ENCODE measurements at regions of chr5 and their contacts with region 1.

Region 1: DNA sequence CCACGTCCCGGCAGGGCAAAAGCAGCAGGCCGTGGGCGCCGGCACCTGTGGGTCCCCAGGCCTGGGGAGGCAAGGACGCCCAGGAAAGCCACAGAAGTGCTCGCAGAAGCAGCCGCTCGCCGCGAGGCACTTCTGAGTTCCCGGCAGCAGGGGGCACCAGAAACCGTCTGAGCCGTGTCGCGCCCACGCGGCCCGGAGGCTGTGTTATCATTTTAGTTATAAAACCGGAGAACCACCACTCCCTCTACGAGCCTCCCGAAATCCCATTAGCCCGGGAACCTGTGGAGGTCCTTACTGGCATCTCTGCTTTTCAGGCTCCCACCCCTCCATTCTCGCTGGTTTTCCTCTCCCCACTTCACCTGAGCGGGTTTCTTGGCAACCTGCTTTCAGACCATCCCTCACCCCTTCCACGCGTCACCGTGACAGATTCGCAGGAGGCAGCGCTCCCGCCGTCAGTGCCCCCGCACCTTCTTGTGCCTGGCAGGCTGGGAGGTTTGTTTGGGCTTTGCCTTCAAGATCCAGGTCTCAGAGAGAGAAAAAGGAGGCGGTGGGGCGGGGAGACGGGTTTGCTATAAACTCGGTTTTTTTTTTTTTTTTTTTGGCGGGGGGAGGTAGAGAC is 2.3 kb downstream of the GDNF start:
- DNase-seq: no peak
- H3K4me3 ChIP-seq: peak overlapping the region; percentile 44 to 54
- H3K27ac ChIP-seq: peak overlapping the region; percentile 36
- H3K4me1 ChIP-seq: peaks cover 51% of the 10 kb centered on the region
- H3K27me3 ChIP-seq: peaks cover 19% of the 10 kb centered on the region
- CTCF ChIP-seq: peak in 2 of 3 experiments; percentile 68 to 75
- POLR2A ChIP-seq: no peak

Region 2: DNA sequence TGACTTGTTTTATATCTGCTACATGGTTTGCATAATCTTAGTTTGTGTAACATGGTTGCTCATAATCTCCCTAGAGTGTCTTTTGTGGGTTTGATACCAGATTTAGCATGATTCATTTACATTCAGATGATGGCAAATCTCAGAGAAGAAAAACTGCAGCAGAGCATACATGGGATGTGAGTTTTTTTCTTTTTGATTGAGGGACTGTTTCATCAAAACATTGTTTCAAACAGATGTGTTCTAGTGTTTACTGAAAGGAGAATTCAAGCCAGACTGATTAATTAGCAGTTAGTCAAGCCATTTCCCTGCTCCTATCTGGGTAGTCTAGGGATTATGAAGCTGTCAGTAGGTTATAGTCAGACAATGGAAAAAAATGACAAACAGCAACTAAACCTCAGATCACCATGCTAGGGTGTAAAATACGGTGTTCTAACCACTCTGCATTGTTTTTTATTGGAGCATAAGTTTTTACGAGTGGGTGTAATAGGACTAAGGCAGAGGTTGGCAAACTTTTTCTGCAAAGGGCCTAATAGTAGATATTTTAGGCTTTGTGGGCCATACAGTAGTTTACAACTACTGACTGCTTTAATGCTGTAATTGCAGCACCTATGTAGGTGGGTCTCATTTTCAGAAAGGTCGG is 12.8 kb after region 1 on chr5:
- intact Hi-C with region 1: no loop called
- DNase-seq: no peak
- H3K4me3 ChIP-seq: no peak overlapping the region
- H3K27ac ChIP-seq: no peak overlapping the region
- H3K4me1 ChIP-seq: no peaks in the 10 kb centered on the region
- H3K27me3 ChIP-seq: no peaks in the 10 kb centered on the region
- CTCF ChIP-seq: no peak
- POLR2A ChIP-seq: no peak

Region 3: DNA sequence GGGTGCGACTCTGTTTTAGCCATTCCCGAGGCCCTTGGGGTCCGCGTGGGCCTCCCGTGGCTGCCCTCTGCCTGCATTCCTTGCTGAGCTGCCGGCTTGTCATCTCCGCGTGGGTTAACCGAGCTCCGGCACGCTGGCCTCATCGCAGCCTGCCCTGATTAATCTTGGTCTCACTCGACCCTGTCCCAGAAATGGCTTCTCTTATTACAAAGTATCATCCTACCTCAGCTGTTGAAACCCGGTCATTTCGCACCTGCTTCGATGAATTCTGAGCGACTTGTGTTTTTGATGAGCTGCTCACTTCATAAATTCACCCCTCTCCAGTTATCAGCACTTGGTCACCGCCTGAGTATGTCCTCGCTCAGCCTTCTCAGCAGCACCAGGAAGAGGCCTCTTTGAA is 297.3 kb after region 1 on chr5:
- intact Hi-C with region 1: loop called (anchors 5 kb)
- DNase-seq: no peak
- H3K4me3 ChIP-seq: no peak overlapping the region
- H3K27ac ChIP-seq: no peak overlapping the region
- H3K4me1 ChIP-seq: no peaks in the 10 kb centered on the region
- H3K27me3 ChIP-seq: no peaks in the 10 kb centered on the region
- CTCF ChIP-seq: no peak
- POLR2A ChIP-seq: no peak

Region 4: GRCh38 chr5:38193015-38193581 is 355.6 kb after region 1 on chr5:
- intact Hi-C with region 1: loop called (anchors 5 kb)
- DNase-seq: no peak
- H3K4me3 ChIP-seq: no peak overlapping the region
- H3K27ac ChIP-seq: no peak overlapping the region
- H3K4me1 ChIP-seq: no peaks in the 10 kb centered on the region
- H3K27me3 ChIP-seq: no peaks in the 10 kb centered on the region
- CTCF ChIP-seq: peak; percentile 79 to 86 (median 83)
- POLR2A ChIP-seq: no peak

Measured in vagina (tissue), 2 donors.